ENCODE measurements at regions of chr6 and their contacts with region 1.

Region 1: DNA sequence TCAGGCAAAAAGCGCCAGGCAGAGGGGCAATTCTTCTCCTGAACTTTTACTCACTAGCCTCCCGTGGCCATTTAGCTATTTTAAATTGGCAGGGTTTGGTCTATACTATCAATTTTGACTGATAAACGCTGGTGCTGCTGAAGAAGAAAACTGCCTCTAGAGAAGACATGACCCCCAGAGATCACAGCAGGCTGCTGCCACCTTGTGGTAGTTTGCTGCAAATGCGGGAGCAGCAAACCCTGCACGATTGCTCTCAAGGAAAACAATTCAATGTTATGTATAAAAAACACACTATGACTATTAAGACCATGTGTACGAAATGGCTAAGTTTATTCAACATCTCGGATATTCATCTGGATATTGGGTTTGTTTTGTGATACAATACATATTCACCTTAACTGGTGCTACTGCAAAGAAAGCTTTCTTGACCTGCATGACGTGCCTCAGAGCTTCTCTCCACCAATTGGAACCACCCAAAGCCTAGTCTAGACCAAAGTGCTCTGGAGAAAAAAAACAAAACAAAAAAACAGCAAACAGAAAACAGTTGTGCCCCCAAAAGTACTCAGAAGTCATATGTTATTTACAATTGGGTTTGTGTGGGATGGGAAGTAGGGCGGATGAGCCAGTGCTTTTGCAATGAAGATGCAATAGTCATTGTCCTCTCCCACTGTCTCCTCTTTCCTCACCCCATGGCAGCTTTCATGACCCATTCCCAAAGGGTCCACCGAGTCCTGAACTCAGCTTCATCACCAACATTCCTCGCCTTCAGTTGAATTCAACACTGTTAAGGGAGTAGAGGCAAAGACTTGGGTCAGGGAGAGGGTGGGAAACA is 19.6 kb upstream of the IL17F start:
- DNase-seq: peak in 9 of 10 donors; percentile 44 to 81 (median 63)
- H3K4me3 ChIP-seq: no peak overlapping the region
- H3K27ac ChIP-seq: no peak overlapping the region
- H3K27me3 ChIP-seq: no peaks in the 10 kb centered on the region
- CTCF ChIP-seq: peak; percentile 72 to 98 (median 91)

Region 2: DNA sequence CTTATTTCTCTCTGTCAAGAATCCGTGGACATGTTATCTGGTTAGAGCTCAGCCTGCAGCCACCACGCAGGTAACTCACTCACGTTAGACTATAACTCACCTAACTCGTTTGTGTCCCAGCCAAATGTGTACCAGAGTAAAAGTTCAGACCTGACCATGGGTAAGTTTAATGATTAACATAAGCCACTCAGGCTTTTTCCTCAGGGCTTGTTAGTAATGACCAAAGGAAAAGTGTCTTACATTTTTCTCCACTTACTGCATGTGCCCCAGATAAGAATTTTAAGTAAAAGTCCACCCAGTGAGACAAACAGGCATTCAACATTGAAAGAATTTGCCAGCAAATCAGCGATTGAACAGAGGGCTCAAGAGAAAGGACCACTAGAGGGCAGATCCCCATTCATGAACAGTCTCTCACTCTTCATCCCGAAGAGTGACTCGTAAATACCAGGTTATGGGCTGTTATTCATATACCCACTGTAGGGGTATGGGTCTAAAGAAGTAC is 176.4 kb before region 1 on chr6 and contains the start of gene PKHD1:
- intact Hi-C with region 1: loop called in 1 of 2 experiments (anchors 10 kb)
- DNase-seq: no peak
- H3K4me3 ChIP-seq: no peak within 1 kb of the TSS
- H3K27ac ChIP-seq: no peak within 1 kb of the TSS
- H3K27me3 ChIP-seq: peaks cover 0 to 5% (median 0%) of the 10 kb centered on the region in 45 donors
- CTCF ChIP-seq: peak in 15 of 56 donors; percentile 7 to 36 (median 14)
- total RNA-seq, gene PKHD1: 0.03 to 0.32 (median 0.07) TPM in 109 of 120 experiments, not detected in the others

Region 3: GRCh38 chr6:52098634-52099185 is 165.2 kb before region 1 on chr6:
- intact Hi-C with region 1: no loop called
- DNase-seq: no peak
- H3K4me3 ChIP-seq: no peak overlapping the region
- H3K27ac ChIP-seq: no peak overlapping the region
- H3K27me3 ChIP-seq: peaks cover 0 to 40% (median 12%) of the 10 kb centered on the region in 45 donors
- CTCF ChIP-seq: peak in 19 of 56 donors; percentile 10 to 43 (median 24)

Region 4: GRCh38 chr6:52162940-52163908 is 100.7 kb before region 1 on chr6:
- intact Hi-C with region 1: loop called (anchors 5 kb)
- DNase-seq: no peak
- H3K4me3 ChIP-seq: no peak overlapping the region
- H3K27ac ChIP-seq: no peak overlapping the region
- H3K27me3 ChIP-seq: peaks cover 0 to 21% (median 0%) of the 10 kb centered on the region in 45 donors
- CTCF ChIP-seq: peak in 55 of 56 donors; percentile 15 to 74 (median 52)